Activated B cell treated with CpG ODN at 0.5 μM for 24 hours (primary cell): ENCODE measurements at regions of chr16 and their contacts with region 1.

Region 1: GRCh38 chr16:66977341-66978113 is 10.9 kb upstream of the CES4A start:
- DNase-seq: peak; percentile 83
- ATAC-seq: peak; percentile 99
- H3K4me3 Mint-ChIP-seq: no peak overlapping the region
- H3K27ac Mint-ChIP-seq: no peak overlapping the region
- H3K4me1 Mint-ChIP-seq: no peaks in the 10 kb centered on the region
- H3K27me3 Mint-ChIP-seq: peaks cover 6% of the 10 kb centered on the region
- CTCF ChIP-seq: peak; percentile 51

Region 2: GRCh38 chr16:66944054-66944441 is 33.5 kb before region 1 on chr16:
- CTCF ChIA-PET with region 1: no interaction called
- POLR2A ChIA-PET with region 1: no interaction called
- intact Hi-C with region 1: no loop called
- DNase-seq: no peak
- ATAC-seq: no peak
- H3K4me3 Mint-ChIP-seq: no peak overlapping the region
- H3K27ac Mint-ChIP-seq: no peak overlapping the region
- H3K4me1 Mint-ChIP-seq: peaks cover 17% of the 10 kb centered on the region
- H3K27me3 Mint-ChIP-seq: peaks cover 2% of the 10 kb centered on the region
- CTCF ChIP-seq: no peak

Region 3: DNA sequence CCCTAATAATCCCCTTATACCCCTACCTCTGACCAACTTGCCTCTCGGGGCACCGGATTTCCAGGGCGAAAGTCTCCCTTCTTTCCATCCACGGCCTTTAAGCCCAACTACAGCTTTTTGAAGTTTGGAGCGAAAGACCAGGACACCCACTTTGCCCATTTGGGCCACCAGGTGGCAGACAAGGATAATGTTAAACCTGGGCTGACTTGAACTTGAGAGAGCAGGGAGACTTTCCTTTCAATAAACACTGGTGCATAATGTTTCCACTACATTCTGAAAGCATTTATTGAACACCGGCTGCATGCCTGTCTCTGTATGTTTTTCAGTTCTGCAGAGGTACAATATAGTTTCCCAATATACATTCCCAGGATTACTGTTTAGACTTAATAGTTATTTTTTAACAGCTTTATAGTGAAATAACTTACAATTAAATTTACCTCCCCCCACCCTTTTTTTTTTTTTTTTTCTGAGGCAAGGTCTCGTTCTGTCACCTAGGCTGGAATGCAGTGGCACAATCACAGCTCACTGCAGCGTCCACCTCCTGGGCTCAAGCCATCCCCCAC is 23.3 kb before region 1 on chr16:
- CTCF ChIA-PET with region 1: interaction called, 5 read pairs
- POLR2A ChIA-PET with region 1: no interaction called
- intact Hi-C with region 1: loop called (anchors 2 kb)
- DNase-seq: peak; percentile 51
- ATAC-seq: peak; percentile 78
- H3K4me3 Mint-ChIP-seq: no peak overlapping the region
- H3K27ac Mint-ChIP-seq: no peak overlapping the region
- H3K4me1 Mint-ChIP-seq: no peaks in the 10 kb centered on the region
- H3K27me3 Mint-ChIP-seq: peaks cover 23% of the 10 kb centered on the region
- CTCF ChIP-seq: no peak

Region 4: DNA sequence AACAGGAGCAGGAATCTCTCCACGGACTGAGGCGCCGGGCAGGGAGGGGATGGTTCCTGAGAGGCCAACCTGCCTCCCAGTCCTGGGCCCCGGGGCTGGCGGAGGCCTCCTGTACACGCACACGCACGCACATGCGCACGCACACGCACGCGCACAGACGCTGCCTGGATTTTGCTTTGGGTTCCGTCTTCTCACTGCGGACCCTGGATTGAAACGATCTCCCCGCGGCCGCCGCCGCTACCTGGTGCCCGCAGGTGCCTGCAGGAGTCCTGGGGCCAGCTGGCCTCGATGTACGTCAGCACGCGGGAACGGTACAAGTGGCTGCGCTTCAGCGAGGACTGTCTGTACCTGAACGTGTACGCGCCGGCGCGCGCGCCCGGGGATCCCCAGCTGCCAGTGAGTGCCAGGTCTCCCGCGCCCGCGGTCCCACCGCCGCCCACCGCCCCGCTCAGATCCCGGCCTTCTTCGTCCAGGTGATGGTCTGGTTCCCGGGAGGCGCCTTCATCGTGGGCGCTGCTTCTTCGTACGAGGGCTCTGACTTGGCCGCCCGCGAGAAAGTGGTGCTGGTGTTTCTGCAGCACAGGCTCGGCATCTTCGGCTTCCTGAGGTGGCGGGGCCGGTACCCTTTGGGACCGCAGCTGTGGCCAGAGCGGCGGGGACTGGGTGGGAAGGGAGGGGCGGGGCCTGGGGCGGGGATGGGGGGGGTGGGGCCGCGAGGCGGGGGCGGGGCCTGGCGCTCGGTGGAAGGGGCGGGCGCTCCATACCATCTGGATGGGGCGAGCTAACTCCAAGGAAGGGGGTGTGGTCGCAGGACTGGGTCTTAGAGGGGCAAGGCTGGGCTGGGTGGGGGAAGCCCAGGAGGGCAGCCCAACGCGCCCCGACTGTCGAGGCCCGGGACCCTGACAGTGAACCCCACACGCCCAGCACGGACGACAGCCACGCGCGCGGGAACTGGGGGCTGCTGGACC is 23.1 kb after region 1 on chr16:
- CTCF ChIA-PET with region 1: no interaction called
- POLR2A ChIA-PET with region 1: no interaction called
- intact Hi-C with region 1: no loop called
- DNase-seq: peak; percentile 54
- ATAC-seq: peak; percentile 71
- H3K4me3 Mint-ChIP-seq: peak overlapping the region; percentile 84
- H3K27ac Mint-ChIP-seq: no peak overlapping the region
- H3K4me1 Mint-ChIP-seq: peaks cover 14% of the 10 kb centered on the region
- H3K27me3 Mint-ChIP-seq: no peaks in the 10 kb centered on the region
- CTCF ChIP-seq: no peak

Region 5: GRCh38 chr16:67183627-67184328 is 206.3 kb after region 1 on chr16 and contains the start of gene MATCAP1:
- CTCF ChIA-PET with region 1: interaction called, 11 read pairs
- POLR2A ChIA-PET with region 1: no interaction called
- intact Hi-C with region 1: loop called (anchors 1 kb)
- DNase-seq: peak; percentile 94
- ATAC-seq: peak; percentile 96
- H3K4me3 Mint-ChIP-seq: peak within 1 kb of the TSS; percentile 85
- H3K27ac Mint-ChIP-seq: no peak within 1 kb of the TSS
- H3K4me1 Mint-ChIP-seq: peaks cover 14% of the 10 kb centered on the region
- H3K27me3 Mint-ChIP-seq: peaks cover 12% of the 10 kb centered on the region
- CTCF ChIP-seq: no peak
- total RNA-seq, gene MATCAP1: 10.6 and 18.7 TPM in 2 replicates

Region 6: GRCh38 chr16:67415872-67416793 is 438.6 kb after region 1 on chr16 and contains the start of gene ZDHHC1:
- CTCF ChIA-PET with region 1: no interaction called
- POLR2A ChIA-PET with region 1: no interaction called
- intact Hi-C with region 1: loop called (anchors 5 kb)
- DNase-seq: peak; percentile 73
- ATAC-seq: peak; percentile 97
- H3K4me3 Mint-ChIP-seq: peak within 1 kb of the TSS; percentile 85
- H3K27ac Mint-ChIP-seq: peak within 1 kb of the TSS; percentile 59
- H3K4me1 Mint-ChIP-seq: peaks cover 8% of the 10 kb centered on the region
- H3K27me3 Mint-ChIP-seq: peaks cover 10% of the 10 kb centered on the region
- CTCF ChIP-seq: no peak
- total RNA-seq, gene ZDHHC1: 2.8 and 3.8 TPM in 2 replicates

Region 7: GRCh38 chr16:67470359-67470758 is 492.8 kb after region 1 on chr16:
- CTCF ChIA-PET with region 1: no interaction called
- POLR2A ChIA-PET with region 1: no interaction called
- intact Hi-C with region 1: loop called (anchors 1 kb)
- DNase-seq: no peak
- ATAC-seq: no peak
- H3K4me3 Mint-ChIP-seq: no peak overlapping the region
- H3K27ac Mint-ChIP-seq: no peak overlapping the region
- H3K4me1 Mint-ChIP-seq: peaks cover 60% of the 10 kb centered on the region
- H3K27me3 Mint-ChIP-seq: no peaks in the 10 kb centered on the region
- CTCF ChIP-seq: no peak